Activated CD8-positive, alpha-beta T cell treated with anti-CD3 and anti-CD28 coated beads for 36 hours (primary cell): ENCODE measurements at regions of chr7 and their contacts with region 1.

Region 1: GRCh38 chr7:116588641-116589594 is 64.1 kb downstream of the CAV1 start:
- DNase-seq: no peak
- ATAC-seq: peak; percentile 21
- H3K4me3 Mint-ChIP-seq: no peak overlapping the region
- H3K27ac Mint-ChIP-seq: peak overlapping the region; percentile 61
- H3K4me1 Mint-ChIP-seq: peaks cover 26% of the 10 kb centered on the region
- H3K27me3 Mint-ChIP-seq: peaks cover 22% of the 10 kb centered on the region
- CTCF ChIP-seq: peak; percentile 85

Region 2: GRCh38 chr7:116138202-116138801 is 450.6 kb before region 1 on chr7:
- CTCF ChIA-PET with region 1: interaction called, 13 read pairs
- POLR2A ChIA-PET with region 1: no interaction called
- intact Hi-C with region 1: no loop called
- DNase-seq: peak; percentile 32
- ATAC-seq: peak; percentile 84
- H3K4me3 Mint-ChIP-seq: no peak overlapping the region
- H3K27ac Mint-ChIP-seq: no peak overlapping the region
- H3K4me1 Mint-ChIP-seq: peaks cover 9% of the 10 kb centered on the region
- H3K27me3 Mint-ChIP-seq: peaks cover 4% of the 10 kb centered on the region
- CTCF ChIP-seq: peak; percentile 71

Region 3: DNA sequence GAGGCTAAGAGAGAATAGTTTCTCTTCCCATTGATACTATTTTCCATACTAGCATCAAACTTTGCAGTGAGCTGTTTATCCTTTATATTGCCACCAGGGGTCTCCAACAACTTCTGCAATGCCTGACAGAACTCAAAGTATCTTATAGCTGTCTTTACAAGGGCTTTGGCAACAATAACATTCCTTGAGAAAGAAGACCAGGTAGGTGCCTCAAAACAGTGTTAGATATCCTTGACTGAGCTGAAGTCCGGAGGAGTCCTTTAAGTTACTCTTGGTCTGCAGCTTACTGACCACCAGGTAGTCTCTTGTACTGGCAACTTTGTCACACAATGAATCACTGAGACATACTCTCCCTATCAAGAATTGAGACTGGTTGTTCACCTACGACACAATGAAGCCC is 408.6 kb before region 1 on chr7:
- CTCF ChIA-PET with region 1: interaction called, 12 read pairs
- POLR2A ChIA-PET with region 1: no interaction called
- intact Hi-C with region 1: no loop called
- DNase-seq: peak; percentile 18
- ATAC-seq: peak; percentile 74
- H3K4me3 Mint-ChIP-seq: no peak overlapping the region
- H3K27ac Mint-ChIP-seq: no peak overlapping the region
- H3K4me1 Mint-ChIP-seq: no peaks in the 10 kb centered on the region
- H3K27me3 Mint-ChIP-seq: no peaks in the 10 kb centered on the region
- CTCF ChIP-seq: peak; percentile 82

Region 4: GRCh38 chr7:116461500-116461899 is 127.4 kb before region 1 on chr7:
- CTCF ChIA-PET with region 1: no interaction called
- POLR2A ChIA-PET with region 1: no interaction called
- intact Hi-C with region 1: loop called (anchors 10 kb)
- DNase-seq: no peak
- ATAC-seq: no peak
- H3K4me3 Mint-ChIP-seq: no peak overlapping the region
- H3K27ac Mint-ChIP-seq: no peak overlapping the region
- H3K4me1 Mint-ChIP-seq: no peaks in the 10 kb centered on the region
- H3K27me3 Mint-ChIP-seq: peaks cover 5% of the 10 kb centered on the region
- CTCF ChIP-seq: no peak

Region 5: DNA sequence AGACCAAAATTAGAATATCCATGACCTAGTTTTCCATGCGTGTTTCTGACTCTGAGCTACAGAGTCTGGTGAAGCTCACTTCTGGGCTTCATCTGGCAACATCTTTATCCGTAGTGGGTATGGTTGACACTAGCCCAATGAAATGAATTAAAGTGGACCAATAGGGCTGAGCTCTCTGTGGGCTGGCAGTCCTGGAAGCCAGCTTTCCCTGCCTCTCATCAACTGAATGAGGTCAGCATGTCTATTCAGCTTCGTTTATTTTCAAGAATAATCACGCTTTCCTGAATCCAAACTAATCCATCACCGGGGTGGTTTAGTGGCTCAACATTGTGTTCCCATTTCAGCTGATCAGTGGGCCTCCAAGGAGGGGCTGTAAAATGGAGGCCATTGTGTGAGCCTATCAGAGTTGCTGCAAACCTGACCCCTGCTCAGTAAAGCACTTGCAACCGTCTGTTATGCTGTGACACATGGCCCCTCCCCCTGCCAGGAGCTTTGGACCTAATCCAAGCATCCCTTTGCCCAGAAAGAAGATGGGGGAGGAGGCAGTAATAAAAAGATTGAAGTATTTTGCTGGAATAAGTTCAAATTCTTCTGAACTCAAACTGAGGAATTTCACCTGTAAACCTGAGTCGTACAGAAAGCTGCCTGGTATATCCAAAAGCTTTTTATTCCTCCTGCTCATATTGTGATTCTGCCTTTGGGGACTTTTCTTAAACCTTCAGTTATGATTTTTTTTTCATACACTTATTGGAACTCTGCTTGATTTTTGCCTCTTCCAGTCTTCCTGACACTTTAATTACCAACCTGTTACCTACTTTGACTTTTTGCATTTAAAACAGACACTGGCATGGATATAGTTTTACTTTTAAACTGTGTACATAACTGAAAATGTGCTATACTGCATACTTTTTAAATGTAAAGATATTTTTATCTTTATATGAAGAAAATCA is 28.6 kb before region 1 on chr7:
- CTCF ChIA-PET with region 1: no interaction called
- POLR2A ChIA-PET with region 1: no interaction called
- intact Hi-C with region 1: no loop called
- DNase-seq: no peak
- ATAC-seq: no peak
- H3K4me3 Mint-ChIP-seq: no peak overlapping the region
- H3K27ac Mint-ChIP-seq: no peak overlapping the region
- H3K4me1 Mint-ChIP-seq: no peaks in the 10 kb centered on the region
- H3K27me3 Mint-ChIP-seq: peaks cover 47% of the 10 kb centered on the region
- CTCF ChIP-seq: no peak

Region 6: GRCh38 chr7:116576350-116577319 is 12.3 kb before region 1 on chr7:
- CTCF ChIA-PET with region 1: interaction called, 15 read pairs
- POLR2A ChIA-PET with region 1: no interaction called
- intact Hi-C with region 1: no loop called
- DNase-seq: peak; percentile 73
- ATAC-seq: peak; percentile 93
- H3K4me3 Mint-ChIP-seq: no peak overlapping the region
- H3K27ac Mint-ChIP-seq: peak overlapping the region; percentile 78
- H3K4me1 Mint-ChIP-seq: peaks cover 16% of the 10 kb centered on the region
- H3K27me3 Mint-ChIP-seq: peaks cover 8% of the 10 kb centered on the region
- CTCF ChIP-seq: no peak

Region 7: DNA sequence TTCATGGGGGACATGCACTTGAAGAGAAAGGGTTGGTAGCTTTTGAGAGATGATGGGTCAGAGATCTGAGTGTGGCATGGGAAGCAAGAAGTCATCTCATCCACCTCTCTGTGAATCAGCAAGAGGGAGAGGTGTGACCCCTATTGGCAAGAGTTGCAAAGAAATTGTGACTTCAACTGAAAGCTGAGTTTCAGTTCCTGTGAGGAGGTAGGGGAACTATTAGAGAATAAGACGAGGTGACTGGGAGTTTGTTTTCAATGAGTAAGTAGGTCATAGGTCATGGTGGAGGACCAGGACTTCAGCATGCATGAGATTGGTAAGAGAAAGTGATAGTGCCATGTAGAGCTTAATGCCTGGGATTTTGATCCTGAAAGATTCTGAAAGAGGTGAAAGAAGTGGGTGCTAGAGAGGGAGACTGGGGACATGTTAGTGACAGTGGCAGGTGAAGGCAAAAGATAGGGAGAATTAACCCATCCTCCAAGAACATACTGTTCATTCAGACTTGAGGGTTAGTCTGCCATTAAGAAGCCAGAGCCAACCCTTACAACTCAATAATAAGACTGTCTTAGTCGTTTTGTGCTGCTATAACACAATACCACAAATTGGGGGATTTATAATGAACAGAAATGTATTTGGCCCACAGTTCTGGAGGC is 198.0 kb after region 1 on chr7:
- CTCF ChIA-PET with region 1: interaction called, 29 read pairs
- POLR2A ChIA-PET with region 1: no interaction called
- intact Hi-C with region 1: loop called (anchors 5 kb)
- DNase-seq: peak; percentile 48
- ATAC-seq: peak; percentile 96
- H3K4me3 Mint-ChIP-seq: no peak overlapping the region
- H3K27ac Mint-ChIP-seq: no peak overlapping the region
- H3K4me1 Mint-ChIP-seq: no peaks in the 10 kb centered on the region
- H3K27me3 Mint-ChIP-seq: peaks cover 2% of the 10 kb centered on the region
- CTCF ChIP-seq: no peak